ENCODE measurements at regions of chr15 and their contacts with region 1.

Region 1: GRCh38 chr15:77034695-77035489 is 36.0 kb downstream of the TSPAN3 start:
- DNase-seq: peak; percentile 74

Region 2: DNA sequence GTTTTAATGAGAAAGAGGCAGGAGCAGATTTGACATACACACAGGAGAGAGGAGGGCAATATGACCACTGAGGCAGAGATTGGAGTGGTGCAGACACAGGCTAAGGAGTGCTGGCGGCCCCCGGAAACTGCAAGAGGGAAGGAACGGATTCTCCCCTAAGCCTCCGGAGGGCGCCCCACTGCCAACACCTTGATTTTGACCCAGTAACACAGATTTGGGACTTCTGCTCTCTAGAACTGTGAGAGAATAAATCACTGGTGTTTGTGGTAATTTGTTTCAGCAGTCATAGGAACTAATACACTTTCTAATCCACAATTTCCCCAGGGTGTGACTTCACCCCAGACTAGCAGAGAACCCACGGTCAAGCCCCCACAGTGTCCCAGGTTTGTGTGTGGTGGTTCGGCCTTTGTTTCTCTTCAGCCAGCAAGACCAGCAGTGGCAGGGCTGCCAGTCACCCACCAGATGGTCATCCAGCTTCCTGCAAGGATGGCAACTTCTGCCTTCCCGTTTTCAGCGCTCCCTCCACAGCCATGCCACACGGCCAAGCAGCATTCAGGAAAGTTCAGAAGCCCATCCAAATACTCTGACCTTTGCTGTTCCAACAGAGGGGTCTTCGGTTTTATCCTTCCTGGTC is 59.6 kb after region 1 on chr15:
- intact Hi-C with region 1: loop called (anchors 5 kb)
- DNase-seq: no peak